A673 (cell line): ENCODE measurements at regions of chr17 and their contacts with region 1.

Region 1: DNA sequence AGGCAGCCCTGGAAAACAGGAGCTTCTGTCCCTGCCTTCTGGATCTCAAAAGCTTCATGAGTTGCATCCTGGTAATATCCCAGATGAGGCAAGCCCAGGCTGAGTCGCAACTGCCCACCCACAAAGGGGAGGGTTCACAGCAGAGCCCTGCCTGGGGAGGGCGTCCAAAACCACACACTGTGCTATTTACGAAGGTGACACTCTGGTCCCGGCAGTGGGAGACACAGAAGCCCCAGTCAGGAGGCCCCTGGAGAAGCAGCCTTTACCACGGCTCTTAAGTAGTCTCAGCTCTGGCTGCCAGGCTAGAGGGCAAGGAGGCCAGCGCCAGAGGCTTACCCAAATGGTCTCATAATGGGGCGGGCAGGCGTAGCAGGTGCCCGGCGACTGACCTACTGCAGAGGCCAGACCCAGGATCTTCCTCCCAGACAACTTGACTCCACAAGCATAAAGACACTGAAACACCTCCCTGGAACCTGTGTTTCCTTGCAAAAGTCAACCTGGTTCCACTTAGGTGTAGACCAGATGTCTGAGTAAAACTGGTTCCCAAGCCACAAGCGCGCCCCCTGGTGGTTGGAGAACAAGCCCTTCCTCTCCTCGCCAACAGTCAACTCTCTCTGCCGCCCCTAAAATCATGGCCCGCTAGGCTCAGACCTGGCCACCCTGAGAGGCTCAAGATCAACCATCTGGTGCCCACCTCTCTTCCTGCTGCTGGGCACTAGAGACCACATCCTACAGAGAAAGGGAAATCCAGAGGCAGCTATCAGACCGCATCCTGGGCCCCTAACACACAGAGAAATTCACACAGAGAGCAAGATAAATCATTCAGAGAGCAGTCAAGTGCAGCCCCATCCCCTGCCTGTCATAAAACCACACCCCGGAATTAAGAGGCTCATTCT is 5.2 kb downstream of the AXIN2 start:
- DNase-seq: peak; percentile 83
- H3K4me3 ChIP-seq: no peak overlapping the region
- H3K27ac ChIP-seq: no peak overlapping the region
- H3K4me1 ChIP-seq: peaks cover 15% of the 10 kb centered on the region
- H3K27me3 ChIP-seq: no peaks in the 10 kb centered on the region
- CTCF ChIP-seq: peak; percentile 92

Region 2: DNA sequence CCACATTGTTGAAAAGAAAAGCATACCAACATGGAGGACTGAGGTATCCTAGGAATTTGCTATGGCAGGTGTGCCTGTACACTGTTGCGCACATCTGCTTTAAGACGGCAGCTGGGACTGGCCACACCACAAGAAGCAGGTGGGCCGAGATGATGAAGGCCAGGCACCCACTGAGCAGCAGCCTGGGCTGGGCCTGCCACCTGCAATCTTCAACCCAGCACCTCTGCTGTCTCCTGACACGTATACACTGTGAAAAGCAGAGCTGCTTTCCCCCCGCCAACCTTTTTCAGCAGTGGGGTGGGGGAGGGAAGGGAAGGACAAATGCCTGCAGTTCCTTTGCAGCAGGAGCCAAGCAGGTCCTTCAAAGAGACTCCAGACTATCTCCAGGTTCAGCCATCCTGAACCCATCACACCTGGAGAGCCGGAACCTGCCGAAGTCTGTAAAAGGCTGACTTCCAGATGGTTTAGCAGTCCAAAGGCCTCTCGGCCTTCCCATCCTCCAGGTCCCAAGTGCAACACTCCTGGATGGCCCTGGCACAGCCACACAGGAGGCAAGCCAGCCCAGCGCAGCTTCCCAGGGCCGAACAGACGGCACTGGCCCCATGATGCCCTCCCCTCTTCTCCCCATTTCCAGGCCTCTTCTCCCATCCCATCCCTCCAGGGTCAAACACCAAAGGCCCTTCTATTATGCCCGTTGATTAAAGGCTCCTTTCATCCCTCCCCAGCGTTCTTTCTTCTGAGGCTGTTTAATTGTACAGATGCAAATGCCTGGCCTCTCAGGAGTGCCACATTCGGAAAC is 25.9 kb before region 1 on chr17:
- CTCF ChIA-PET with region 1: no interaction called
- POLR2A ChIA-PET with region 1: no interaction called
- intact Hi-C with region 1: no loop called
- DNase-seq: no peak
- H3K4me3 ChIP-seq: no peak overlapping the region
- H3K27ac ChIP-seq: no peak overlapping the region
- H3K4me1 ChIP-seq: peaks cover 7% of the 10 kb centered on the region
- H3K27me3 ChIP-seq: no peaks in the 10 kb centered on the region
- CTCF ChIP-seq: no peak

Region 3: DNA sequence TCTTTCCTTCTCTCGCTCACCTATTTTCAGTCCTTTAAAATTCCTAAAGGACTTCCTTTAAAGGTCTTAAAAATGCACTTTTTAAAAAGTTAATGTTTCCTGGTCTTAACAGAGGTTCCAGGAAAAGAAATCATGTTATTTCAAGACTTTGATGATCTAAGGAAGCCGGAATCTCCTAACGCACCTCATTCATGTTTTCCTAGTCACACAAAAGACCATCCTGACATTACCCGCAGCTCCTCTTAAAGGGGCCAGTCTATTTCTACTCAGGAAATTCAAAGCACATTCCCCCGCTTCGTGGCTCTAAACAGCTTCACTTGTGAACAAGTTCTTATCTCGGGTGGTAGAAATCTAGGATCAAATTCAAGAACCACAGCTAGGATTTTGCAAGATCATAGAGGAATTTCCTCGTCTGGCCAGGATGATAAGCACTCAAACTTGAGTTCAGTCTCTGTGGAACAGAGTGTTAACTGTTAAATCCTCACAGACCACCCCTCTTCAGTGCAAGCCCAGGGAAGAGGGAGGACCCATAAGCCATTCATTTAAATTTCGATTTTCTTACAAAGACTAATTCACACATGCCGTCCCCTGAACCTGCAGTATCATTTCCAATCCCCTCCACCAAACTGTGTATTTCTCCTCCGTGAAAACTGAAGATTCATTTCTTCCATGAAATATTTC is 142.3 kb after region 1 on chr17:
- CTCF ChIA-PET with region 1: no interaction called
- POLR2A ChIA-PET with region 1: no interaction called
- intact Hi-C with region 1: no loop called
- DNase-seq: no peak
- H3K4me3 ChIP-seq: no peak overlapping the region
- H3K27ac ChIP-seq: no peak overlapping the region
- H3K4me1 ChIP-seq: no peaks in the 10 kb centered on the region
- H3K27me3 ChIP-seq: no peaks in the 10 kb centered on the region
- CTCF ChIP-seq: no peak

Region 4: GRCh38 chr17:66165513-66166123 is 609.4 kb after region 1 on chr17:
- CTCF ChIA-PET with region 1: interaction called, 5 read pairs
- POLR2A ChIA-PET with region 1: no interaction called
- intact Hi-C with region 1: loop called (anchors 10 kb)
- DNase-seq: peak; percentile 72
- H3K4me3 ChIP-seq: no peak overlapping the region
- H3K27ac ChIP-seq: no peak overlapping the region
- H3K4me1 ChIP-seq: no peaks in the 10 kb centered on the region
- H3K27me3 ChIP-seq: no peaks in the 10 kb centered on the region
- CTCF ChIP-seq: peak; percentile 76